Posterior cingulate gyrus (tissue), 11 donors: ENCODE measurements at regions of chr1 and their contacts with region 1.

Region 1: GRCh38 chr1:221203224-221204054 is 324.2 kb downstream of the HLX start:
- DNase-seq: peak; percentile 29 to 93 (median 77)

Region 2: GRCh38 chr1:220873868-220874655 is 329.4 kb before region 1 on chr1:
- intact Hi-C with region 1: loop called (anchors 1 kb)
- DNase-seq: peak in 2 of 10 donors; percentile 47 to 66

Region 3: DNA sequence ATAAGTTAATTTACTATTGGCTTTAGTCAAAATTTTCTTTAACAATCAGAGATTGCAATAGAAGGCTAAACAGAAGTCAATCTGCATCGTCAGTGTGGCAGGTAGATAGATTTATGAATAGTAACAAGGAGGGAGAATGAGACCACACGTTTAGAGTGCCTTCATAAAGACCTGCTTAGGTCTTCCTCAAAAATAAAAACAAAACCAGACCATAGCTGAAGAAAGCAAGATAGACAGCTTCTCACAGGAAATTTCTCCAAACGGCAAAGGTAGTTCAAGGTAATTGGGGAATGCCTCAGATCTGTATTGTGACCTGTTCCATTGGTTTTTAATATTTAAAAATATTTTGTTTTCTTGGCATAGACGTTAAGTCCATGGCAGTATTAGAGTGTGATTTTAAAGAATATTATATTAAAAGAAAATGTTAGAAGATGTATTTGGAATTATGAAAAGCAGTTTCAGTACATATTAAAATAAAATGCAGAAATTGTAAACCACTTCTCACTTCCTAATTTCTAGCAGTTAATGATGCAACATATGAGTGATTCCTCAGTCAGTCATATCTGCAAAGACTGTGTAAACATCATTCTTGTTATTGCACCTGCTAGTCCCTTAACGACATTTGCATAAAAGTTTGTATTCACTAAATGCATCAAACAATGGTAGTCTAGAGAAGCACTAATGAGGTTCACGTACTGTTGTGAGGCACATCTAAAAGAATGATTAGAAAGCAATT is 46.2 kb before region 1 on chr1:
- intact Hi-C with region 1: no loop called
- DNase-seq: no peak